CD8-positive, alpha-beta T cell (primary cell): ENCODE measurements at regions of chr13 and their contacts with region 1.

Region 1: GRCh38 chr13:31044377-31045285 is 112.2 kb downstream of the TEX26 start:
- DNase-seq: peak; percentile 59 to 86 (median 79)
- ATAC-seq: peak; percentile 83
- H3K4me3 ChIP-seq: no peak overlapping the region
- H3K4me3 Mint-ChIP-seq: no peak overlapping the region
- H3K27ac ChIP-seq: peak overlapping the region in 1 of 2 experiments; percentile 49
- H3K27ac Mint-ChIP-seq: no peak overlapping the region
- H3K4me1 ChIP-seq: peaks cover 32% of the 10 kb centered on the region
- H3K4me1 Mint-ChIP-seq: peaks cover 36% of the 10 kb centered on the region
- H3K27me3 ChIP-seq: peaks cover 5 to 6% of the 10 kb centered on the region in 2 experiments
- H3K27me3 Mint-ChIP-seq: peaks cover 20% of the 10 kb centered on the region
- CTCF ChIP-seq: peak; percentile 92

Region 2: DNA sequence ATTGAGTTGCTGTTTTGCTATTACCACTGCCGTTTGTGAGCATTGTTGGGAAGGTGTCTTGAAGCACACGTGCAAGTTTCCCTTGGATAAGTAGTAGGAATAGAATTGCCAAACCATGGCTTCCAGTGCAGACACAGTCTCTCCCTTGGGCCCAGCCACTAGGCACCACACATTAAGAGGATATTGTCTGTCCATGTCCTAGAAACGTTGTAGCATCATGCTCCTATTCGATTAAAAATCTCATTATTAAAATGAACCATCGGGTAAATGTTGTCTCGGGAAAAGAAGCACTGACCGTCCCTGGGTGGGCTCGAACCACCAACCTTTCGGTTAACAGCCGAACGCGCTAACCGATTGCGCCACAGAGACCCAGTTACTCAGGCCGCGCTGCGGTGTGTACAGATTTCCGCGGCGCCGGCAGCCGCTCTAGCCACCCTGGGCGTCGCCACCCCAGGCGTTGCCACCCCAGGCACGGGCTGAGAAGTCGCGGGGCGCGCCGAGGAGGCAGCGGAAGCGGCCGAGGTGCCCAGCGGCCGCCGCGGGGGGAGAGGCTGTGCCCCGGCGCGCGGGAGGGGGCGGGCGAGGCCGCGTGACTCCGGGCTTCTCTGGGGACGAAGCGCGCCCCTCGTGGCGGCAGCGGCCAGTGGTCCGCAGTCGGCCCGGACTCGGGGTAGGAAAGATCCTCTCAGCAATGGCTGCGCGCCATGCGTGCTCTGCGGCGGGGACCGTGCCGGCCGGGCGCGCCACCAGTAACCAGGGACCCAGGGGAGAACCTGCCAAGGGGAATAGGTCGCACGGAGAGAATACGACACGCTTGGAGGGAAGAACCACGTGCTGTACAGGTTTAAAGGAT is 370.7 kb before region 1 on chr13:
- CTCF ChIA-PET with region 1: no interaction called
- POLR2A ChIA-PET with region 1: no interaction called
- intact Hi-C with region 1: loop called in 1 of 2 experiments (anchors 10 kb)
- DNase-seq: peak; percentile 82 to 95 (median 87)
- ATAC-seq: peak; percentile 91
- H3K4me3 ChIP-seq: peak overlapping the region; percentile 63
- H3K4me3 Mint-ChIP-seq: peak overlapping the region; percentile 88
- H3K27ac ChIP-seq: peak overlapping the region; percentile 44 to 68
- H3K27ac Mint-ChIP-seq: peak overlapping the region; percentile 92
- H3K4me1 ChIP-seq: peaks cover 7% of the 10 kb centered on the region
- H3K4me1 Mint-ChIP-seq: peaks cover 25% of the 10 kb centered on the region
- H3K27me3 ChIP-seq: no peaks in the 10 kb centered on the region
- H3K27me3 Mint-ChIP-seq: no peaks in the 10 kb centered on the region
- CTCF ChIP-seq: no peak

Region 3: DNA sequence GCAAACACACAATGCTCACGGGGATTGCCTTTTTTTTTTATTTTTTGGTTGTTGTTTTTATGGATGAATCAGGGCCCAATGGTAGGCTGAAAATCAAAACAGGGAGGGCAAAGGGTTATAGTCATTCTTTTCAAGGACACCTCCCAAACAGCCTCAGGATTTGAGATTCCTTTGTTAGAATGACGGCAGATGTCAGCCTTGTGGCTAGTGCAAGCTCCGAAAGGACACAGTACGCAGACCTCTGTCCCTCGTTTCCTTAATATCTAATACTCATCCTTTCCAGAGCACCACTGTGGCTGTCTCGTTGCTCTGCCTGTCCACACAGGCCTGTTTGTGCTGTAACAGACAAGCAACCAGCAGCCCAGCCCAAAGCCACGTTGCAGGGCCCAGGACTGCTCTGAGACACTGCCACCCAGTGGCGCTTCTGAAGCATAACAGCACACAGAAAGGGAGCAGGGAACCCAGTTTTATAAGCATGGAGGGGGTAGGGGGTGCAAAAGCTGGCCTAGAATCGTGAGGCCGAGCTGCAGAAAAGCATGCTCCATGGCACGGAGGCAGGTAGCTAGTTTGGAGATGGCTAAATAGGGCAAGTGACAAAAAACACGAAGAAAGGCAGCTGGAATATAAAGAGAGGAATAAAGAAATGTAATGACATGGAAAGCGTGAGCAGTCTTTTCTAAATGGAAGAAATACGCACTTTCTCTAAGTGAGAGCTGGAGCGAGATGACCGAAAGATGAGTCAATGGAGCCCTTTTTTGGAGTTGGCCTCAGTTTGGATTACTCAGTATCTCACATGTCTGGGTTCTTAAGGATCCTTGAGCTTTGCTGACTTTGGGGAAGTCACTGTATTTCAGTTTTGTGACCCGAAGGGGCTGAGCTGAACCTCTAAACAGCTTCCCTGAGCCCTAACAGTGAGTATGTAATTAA is 179.2 kb before region 1 on chr13:
- CTCF ChIA-PET with region 1: interaction called, 3 read pairs
- POLR2A ChIA-PET with region 1: no interaction called
- intact Hi-C with region 1: loop called (anchors 1 to 5 kb)
- DNase-seq: peak in 8 of 9 experiments; percentile 24 to 68 (median 48)
- ATAC-seq: peak; percentile 93
- H3K4me3 ChIP-seq: no peak overlapping the region
- H3K4me3 Mint-ChIP-seq: no peak overlapping the region
- H3K27ac ChIP-seq: no peak overlapping the region
- H3K27ac Mint-ChIP-seq: no peak overlapping the region
- H3K4me1 ChIP-seq: no peaks in the 10 kb centered on the region
- H3K4me1 Mint-ChIP-seq: peaks cover 2% of the 10 kb centered on the region
- H3K27me3 ChIP-seq: no peaks in the 10 kb centered on the region
- H3K27me3 Mint-ChIP-seq: peaks cover 9% of the 10 kb centered on the region
- CTCF ChIP-seq: peak; percentile 97

Region 4: GRCh38 chr13:31029102-31029501 is 15.5 kb before region 1 on chr13:
- CTCF ChIA-PET with region 1: interaction called, 10 read pairs
- POLR2A ChIA-PET with region 1: interaction called, 4 read pairs
- intact Hi-C with region 1: no loop called
- DNase-seq: no peak
- ATAC-seq: no peak
- H3K4me3 ChIP-seq: no peak overlapping the region
- H3K4me3 Mint-ChIP-seq: no peak overlapping the region
- H3K27ac ChIP-seq: no peak overlapping the region
- H3K27ac Mint-ChIP-seq: no peak overlapping the region
- H3K4me1 ChIP-seq: no peaks in the 10 kb centered on the region
- H3K4me1 Mint-ChIP-seq: no peaks in the 10 kb centered on the region
- H3K27me3 ChIP-seq: no peaks in the 10 kb centered on the region
- H3K27me3 Mint-ChIP-seq: peaks cover 3% of the 10 kb centered on the region
- CTCF ChIP-seq: no peak

Region 5: DNA sequence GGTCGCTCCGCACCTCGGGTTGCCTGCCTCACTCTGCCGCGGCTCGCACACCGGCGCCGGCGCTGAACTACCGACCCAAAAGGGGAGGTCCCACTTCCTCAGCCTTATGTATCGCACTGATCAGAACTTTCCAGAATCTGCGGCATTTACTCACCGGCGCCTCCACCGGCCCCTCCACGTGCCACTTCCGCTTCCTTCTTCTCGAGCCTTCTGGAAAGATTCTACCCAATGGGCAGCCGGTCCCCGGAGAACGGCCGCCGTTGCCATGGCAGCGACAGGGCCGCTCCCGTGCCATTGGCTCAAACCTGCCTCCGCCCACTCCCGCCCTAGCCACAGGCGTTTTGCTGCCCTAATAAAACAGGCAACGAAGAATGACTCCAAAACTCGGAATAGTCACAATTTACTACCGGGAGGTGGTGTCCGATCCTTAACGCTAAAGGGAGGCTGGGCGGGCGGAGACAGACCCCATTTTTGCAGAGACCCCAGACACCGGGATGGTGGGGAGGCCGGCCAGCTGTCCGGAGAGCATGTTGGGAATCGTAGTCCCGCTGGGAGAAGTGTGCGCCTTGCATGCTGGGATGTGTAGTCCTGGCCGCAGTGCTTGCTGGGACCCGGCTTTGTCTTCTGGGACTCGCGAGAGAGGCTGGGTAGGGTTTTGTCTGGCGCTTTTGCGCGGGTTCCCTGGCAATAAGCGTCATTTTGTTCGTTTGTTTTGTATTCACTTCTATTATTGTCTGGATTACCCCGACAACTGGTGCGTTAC is 117.4 kb after region 1 on chr13 and contains the start of gene HSPH1:
- CTCF ChIA-PET with region 1: no interaction called
- POLR2A ChIA-PET with region 1: no interaction called
- intact Hi-C with region 1: loop called in 1 of 2 experiments (anchors 1 kb)
- DNase-seq: peak; percentile 96 to 99 (median 98)
- ATAC-seq: peak; percentile 83
- H3K4me3 ChIP-seq: peak within 1 kb of the TSS; percentile 76 to 95
- H3K4me3 Mint-ChIP-seq: peak within 1 kb of the TSS; percentile 95
- H3K27ac ChIP-seq: peak within 1 kb of the TSS; percentile 98
- H3K27ac Mint-ChIP-seq: peak within 1 kb of the TSS; percentile 98
- H3K4me1 ChIP-seq: peaks cover 25% of the 10 kb centered on the region
- H3K4me1 Mint-ChIP-seq: peaks cover 43% of the 10 kb centered on the region
- H3K27me3 ChIP-seq: no peaks in the 10 kb centered on the region
- H3K27me3 Mint-ChIP-seq: no peaks in the 10 kb centered on the region
- CTCF ChIP-seq: no peak
- total RNA-seq, gene HSPH1: 189 to 199 TPM

Region 6: DNA sequence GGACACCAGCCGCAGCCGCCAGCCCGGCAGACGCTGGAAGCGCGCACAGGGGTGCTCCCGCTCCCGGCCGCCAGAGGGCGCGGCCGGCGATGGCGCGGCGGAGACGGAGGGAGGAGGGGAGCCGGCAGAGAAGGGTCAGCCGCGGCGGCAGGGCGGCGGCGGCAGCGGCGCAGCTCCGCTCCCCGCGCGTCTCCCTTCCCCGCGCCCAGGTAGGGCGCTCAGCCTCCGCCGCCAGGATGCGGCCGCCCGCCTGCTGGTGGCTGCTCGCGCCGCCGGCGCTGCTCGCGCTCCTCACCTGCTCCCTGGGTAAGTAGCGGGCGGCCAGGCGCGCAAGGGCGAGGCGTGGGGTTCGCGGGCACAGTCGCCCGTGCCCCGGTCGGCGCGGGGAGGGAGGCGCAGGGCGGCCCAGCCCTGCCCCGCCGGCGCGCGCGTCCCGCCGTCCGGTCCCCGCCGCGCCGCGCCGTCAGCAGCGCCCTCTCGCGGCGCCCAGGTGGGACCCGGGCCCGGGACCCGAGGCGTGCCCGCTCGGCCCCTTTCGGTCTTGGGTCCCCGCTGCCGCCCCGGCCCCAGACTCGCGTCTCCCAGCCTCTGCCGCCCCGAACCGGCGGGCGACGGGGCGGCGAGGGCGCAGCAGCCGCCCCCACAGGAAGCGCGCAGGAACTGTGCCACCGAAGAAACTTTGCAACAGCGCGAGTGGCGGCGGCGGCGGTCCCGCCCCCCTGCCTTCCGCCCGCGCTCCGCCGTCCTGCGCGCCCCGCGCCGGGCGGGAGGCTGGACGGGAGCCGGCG is 155.4 kb after region 1 on chr13 and contains the start of gene B3GLCT:
- CTCF ChIA-PET with region 1: no interaction called
- POLR2A ChIA-PET with region 1: interaction called, 3 read pairs
- intact Hi-C with region 1: loop called in 1 of 2 experiments (anchors 10 kb)
- DNase-seq: peak; percentile 71 to 91 (median 80)
- ATAC-seq: peak; percentile 78
- H3K4me3 ChIP-seq: peak within 1 kb of the TSS; percentile 65 to 81
- H3K4me3 Mint-ChIP-seq: peak within 1 kb of the TSS; percentile 84
- H3K27ac ChIP-seq: peak within 1 kb of the TSS; percentile 88
- H3K27ac Mint-ChIP-seq: peak within 1 kb of the TSS; percentile 92
- H3K4me1 ChIP-seq: peaks cover 18% of the 10 kb centered on the region
- H3K4me1 Mint-ChIP-seq: peaks cover 29% of the 10 kb centered on the region
- H3K27me3 ChIP-seq: no peaks in the 10 kb centered on the region
- H3K27me3 Mint-ChIP-seq: no peaks in the 10 kb centered on the region
- CTCF ChIP-seq: peak; percentile 94
- total RNA-seq, gene B3GLCT: 5.0 TPM